CD14-positive monocyte (primary cell): ENCODE measurements at regions of chr19 and their contacts with region 1.

Region 1: DNA sequence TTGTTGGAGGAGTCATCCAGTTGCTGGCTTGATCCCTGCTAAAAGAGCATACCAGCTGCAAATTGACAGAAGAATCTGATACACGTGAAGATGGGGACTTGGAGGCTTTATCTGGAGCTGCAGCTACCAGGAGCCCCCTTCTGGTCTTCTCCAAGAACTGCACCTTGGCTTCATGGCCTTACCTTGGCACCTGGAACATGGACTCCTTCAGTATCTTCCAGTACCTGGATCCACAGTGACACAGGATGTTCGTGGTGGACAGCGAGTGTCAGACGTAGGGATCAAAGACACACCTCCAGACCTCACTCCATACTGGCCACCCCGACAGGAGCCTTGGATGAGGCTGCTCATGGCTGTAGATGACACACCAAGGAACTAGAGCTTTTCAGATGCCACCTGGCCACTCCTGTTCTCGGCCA is 9.9 kb upstream of the ACSBG2 start:
- DNase-seq: peak; percentile 67 to 86 (median 77)
- H3K4me3 ChIP-seq: no peak overlapping the region
- H3K4me3 Mint-ChIP-seq: no peak overlapping the region
- H3K27ac ChIP-seq: no peak overlapping the region
- H3K27ac Mint-ChIP-seq: peak overlapping the region in 2 of 7 donors; percentile 75 to 78
- H3K4me1 ChIP-seq: no peaks in the 10 kb centered on the region
- H3K4me1 Mint-ChIP-seq: peaks cover 2% of the 10 kb centered on the region
- H3K27me3 ChIP-seq: no peaks in the 10 kb centered on the region
- H3K27me3 Mint-ChIP-seq: peaks cover 0 to 8% (median 4%) of the 10 kb centered on the region in 3 donors
- CTCF ChIP-seq: peak; percentile 96

Region 2: GRCh38 chr19:5987077-5987818 is 138.3 kb before region 1 on chr19:
- intact Hi-C with region 1: loop called in 1 of 2 experiments (anchors 10 kb)
- DNase-seq: peak; percentile 56 to 77 (median 65)
- H3K4me3 ChIP-seq: peak overlapping the region; percentile 40 to 77 (median 53)
- H3K4me3 Mint-ChIP-seq: peak overlapping the region; percentile 83 to 92
- H3K27ac ChIP-seq: peak overlapping the region in 1 of 2 donors; percentile 47
- H3K27ac Mint-ChIP-seq: peak overlapping the region in 3 of 7 donors; percentile 12 to 70 (median 14)
- H3K4me1 ChIP-seq: peaks cover 17 to 23% of the 10 kb centered on the region in 2 donors
- H3K4me1 Mint-ChIP-seq: peaks cover 31% of the 10 kb centered on the region
- H3K27me3 ChIP-seq: no peaks in the 10 kb centered on the region
- H3K27me3 Mint-ChIP-seq: peaks cover 0 to 2% (median 0%) of the 10 kb centered on the region in 3 donors
- CTCF ChIP-seq: peak; percentile 86

Region 3: DNA sequence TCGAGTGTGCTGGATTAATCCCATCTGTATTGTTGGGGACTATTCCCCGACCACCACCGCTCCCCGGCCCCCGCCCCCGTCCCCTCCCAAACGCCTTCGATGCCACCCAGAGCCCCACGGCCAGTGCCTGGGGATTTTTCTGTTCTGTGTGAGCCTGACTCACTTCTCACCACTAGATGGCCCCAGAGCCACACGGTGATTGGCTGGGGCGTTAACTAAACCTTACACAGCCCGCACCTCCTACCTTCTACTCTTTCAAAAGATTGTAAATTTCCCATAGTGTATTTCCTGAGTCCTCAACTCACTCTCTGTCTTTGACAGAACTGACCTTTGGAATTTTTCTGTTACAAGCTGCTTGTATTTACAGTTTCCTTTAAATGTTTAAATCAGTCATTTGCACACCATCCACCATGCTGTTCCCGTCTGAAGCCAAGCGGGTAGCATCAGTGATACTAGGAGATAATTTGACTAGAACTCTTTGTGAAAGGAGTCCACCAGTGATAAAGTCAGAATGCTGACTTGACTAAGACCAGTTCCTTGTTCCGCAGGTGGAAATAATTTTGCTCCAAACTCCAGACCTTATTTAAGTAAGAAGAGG is 76.7 kb before region 1 on chr19:
- intact Hi-C with region 1: loop called (anchors 1 to 2 kb)
- DNase-seq: peak; percentile 74 to 87 (median 80)
- H3K4me3 ChIP-seq: no peak overlapping the region
- H3K4me3 Mint-ChIP-seq: no peak overlapping the region
- H3K27ac ChIP-seq: no peak overlapping the region
- H3K27ac Mint-ChIP-seq: peak overlapping the region in 4 of 7 donors; percentile 45 to 78 (median 68)
- H3K4me1 ChIP-seq: no peaks in the 10 kb centered on the region
- H3K4me1 Mint-ChIP-seq: peaks cover 5% of the 10 kb centered on the region
- H3K27me3 ChIP-seq: no peaks in the 10 kb centered on the region
- H3K27me3 Mint-ChIP-seq: peaks cover 0 to 3% (median 0%) of the 10 kb centered on the region in 3 donors
- CTCF ChIP-seq: peak; percentile 79

Region 4: GRCh38 chr19:6087074-6087571 is 38.5 kb before region 1 on chr19:
- intact Hi-C with region 1: loop called in 1 of 2 experiments (anchors 5 kb)
- DNase-seq: peak in 1 of 3 donors; percentile 25
- H3K4me3 ChIP-seq: peak overlapping the region in 1 of 3 experiments; percentile 44
- H3K4me3 Mint-ChIP-seq: peak overlapping the region; percentile 56 to 81
- H3K27ac ChIP-seq: peak overlapping the region; percentile 89
- H3K27ac Mint-ChIP-seq: peak overlapping the region; percentile 89 to 99 (median 95)
- H3K4me1 ChIP-seq: peaks cover 28 to 33% of the 10 kb centered on the region in 2 donors
- H3K4me1 Mint-ChIP-seq: peaks cover 39% of the 10 kb centered on the region
- H3K27me3 ChIP-seq: no peaks in the 10 kb centered on the region
- H3K27me3 Mint-ChIP-seq: peaks cover 0 to 3% (median 1%) of the 10 kb centered on the region in 3 donors
- CTCF ChIP-seq: no peak

Region 5: DNA sequence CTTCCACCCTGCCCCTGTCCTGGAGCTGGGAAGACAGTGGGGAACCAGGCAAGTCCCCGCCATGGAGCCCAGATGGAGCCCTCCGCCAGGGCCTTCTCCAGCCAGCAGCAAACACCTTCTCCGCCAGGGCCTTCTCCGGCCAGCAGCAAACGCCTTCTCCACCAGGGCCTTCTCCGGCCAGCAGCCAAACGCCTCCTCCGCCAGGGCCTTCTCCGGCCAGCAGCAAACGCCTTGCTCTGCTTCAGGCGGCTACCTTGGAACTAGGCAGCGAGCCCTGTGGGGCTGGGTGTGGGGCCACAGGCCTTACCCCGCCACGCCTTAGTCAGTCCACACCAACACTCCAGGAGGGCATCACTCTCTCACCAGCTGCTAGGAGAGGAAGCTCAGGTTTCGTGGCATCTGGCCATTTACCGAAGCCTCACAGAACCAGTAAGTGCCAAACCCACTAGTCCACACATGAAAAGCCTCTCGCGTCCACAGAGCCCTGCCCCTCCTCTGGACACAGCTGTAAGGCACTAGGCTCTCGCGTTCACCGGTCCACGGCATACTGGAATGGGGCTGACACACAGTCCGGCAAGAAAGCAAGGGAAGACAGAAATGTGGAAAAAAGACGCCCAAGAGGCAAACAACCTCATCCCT is 113.2 kb after region 1 on chr19:
- intact Hi-C with region 1: no loop called
- DNase-seq: no peak
- H3K4me3 ChIP-seq: no peak overlapping the region
- H3K4me3 Mint-ChIP-seq: no peak overlapping the region
- H3K27ac ChIP-seq: no peak overlapping the region
- H3K27ac Mint-ChIP-seq: peak overlapping the region in 1 of 7 donors; percentile 77
- H3K4me1 ChIP-seq: peaks cover 24 to 33% of the 10 kb centered on the region in 2 donors
- H3K4me1 Mint-ChIP-seq: peaks cover 44% of the 10 kb centered on the region
- H3K27me3 ChIP-seq: no peaks in the 10 kb centered on the region
- H3K27me3 Mint-ChIP-seq: peaks cover 0 to 2% (median 0%) of the 10 kb centered on the region in 3 donors
- CTCF ChIP-seq: no peak

Region 6: GRCh38 chr19:6249296-6249695 is 123.7 kb after region 1 on chr19:
- intact Hi-C with region 1: no loop called
- DNase-seq: no peak
- H3K4me3 ChIP-seq: no peak overlapping the region
- H3K4me3 Mint-ChIP-seq: no peak overlapping the region
- H3K27ac ChIP-seq: no peak overlapping the region
- H3K27ac Mint-ChIP-seq: peak overlapping the region in 4 of 7 donors; percentile 7 to 57 (median 45)
- H3K4me1 ChIP-seq: peaks cover 24 to 33% of the 10 kb centered on the region in 2 donors
- H3K4me1 Mint-ChIP-seq: peaks cover 54% of the 10 kb centered on the region
- H3K27me3 ChIP-seq: no peaks in the 10 kb centered on the region
- H3K27me3 Mint-ChIP-seq: peaks cover 0 to 2% (median 0%) of the 10 kb centered on the region in 3 donors
- CTCF ChIP-seq: no peak